Right ventricle myocardium inferior (tissue), 1 donor: ENCODE measurements at regions of chr11 and their contacts with region 1.

Region 1: DNA sequence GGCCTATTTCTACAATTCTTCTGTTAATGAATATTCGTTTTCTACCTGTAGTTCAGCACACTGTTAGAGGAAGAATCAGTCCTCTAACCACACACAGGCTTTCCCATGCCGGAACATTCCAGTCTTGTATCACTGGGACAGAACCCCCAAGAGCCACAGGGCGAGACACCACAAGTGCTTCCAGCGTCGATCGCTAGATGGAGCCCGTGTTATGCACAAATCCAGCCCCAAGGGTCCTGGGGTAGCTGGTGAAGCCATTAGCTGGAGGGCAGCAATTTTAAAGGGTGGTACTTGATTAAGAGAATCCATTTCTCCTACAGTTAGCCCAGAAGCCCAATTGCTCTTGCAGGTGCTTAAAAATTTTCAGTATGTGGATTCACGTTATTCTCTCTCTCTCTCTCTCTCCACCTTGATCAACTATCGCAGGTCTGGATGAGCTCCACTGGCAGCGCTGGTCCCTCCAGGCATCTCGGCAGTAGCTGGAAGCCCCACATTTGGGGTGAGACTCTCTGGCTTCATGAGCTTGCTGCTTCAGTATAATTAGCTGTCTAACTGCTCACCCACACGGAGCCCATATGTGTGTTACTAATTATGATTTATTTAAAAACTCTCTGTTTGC is 148.2 kb upstream of the SNX19 start:
- DNase-seq: no peak
- ATAC-seq: no peak

Region 2: DNA sequence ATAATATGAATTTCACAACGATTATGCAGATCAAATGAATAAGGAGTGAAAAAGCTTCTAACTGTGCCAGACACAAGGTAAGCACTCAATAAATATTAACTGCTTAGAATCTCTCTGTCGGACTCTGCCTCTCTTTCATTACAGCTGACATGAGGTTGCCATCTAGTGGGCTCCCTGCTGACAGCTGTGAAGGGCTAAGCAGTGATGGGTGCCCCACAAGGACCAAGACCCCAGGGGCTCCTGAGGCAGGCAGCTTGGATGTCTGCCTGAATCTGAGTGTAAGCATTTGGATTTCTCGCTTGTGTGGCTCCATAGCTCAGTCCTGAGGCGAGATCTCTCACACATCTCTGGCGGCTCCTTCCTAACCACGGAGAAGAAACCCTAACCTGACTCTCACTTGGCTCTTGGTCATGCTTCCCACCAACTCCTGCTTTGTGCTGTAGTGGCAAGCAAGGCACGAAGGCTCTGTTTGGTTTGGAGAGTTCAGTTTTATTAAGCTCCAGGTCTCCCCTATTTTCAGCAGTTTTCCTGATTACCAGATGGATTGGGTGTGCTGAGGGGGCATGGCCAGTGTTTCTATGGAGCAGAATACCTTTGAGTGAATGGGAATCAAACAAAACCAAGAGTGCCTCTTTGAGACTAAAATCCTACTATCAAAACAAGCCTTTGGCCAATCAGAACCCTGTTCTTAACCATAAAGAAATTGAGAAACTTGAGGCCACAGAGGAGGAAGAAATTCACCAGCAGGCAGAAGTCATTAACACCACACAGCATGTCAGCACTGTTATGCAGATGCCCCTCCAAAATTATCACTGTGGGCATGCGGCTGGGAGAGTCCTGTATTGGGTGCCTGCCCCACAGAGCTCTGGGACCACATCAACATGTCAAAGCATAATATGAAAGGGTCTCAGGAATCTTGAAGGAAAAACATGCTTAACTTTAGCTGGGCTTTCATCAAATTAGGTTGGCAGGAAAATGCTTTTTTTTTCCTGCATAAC is 153.1 kb after region 1 on chr11:
- intact Hi-C with region 1: loop called (anchors 2 kb)
- DNase-seq: no peak
- ATAC-seq: no peak

Region 3: GRCh38 chr11:131504199-131504949 is 439.9 kb after region 1 on chr11:
- intact Hi-C with region 1: loop called (anchors 5 kb)
- DNase-seq: no peak
- ATAC-seq: peak; percentile 63

Region 4: DNA sequence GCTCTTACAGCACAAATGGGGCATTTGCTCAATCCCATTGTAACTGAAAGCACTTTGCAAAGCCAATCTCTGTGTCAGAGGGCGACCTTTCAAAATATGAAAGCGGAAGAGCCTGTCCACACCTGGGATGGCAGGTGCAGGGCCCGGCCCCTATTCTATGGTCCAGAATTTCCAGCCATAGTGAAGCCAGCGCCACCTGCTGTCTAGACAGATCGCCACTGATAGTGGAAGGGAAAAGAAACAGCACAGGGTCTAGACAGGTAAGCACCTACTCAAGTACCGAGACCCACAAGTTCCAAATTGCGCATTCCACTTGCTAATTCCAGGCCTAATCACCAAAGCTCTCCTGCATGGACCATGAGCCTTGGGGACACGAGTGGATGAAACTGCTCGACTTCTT is 447.3 kb after region 1 on chr11:
- intact Hi-C with region 1: loop called (anchors 5 kb)
- DNase-seq: no peak
- ATAC-seq: no peak